Naive thymus-derived CD4-positive, alpha-beta T cell (primary cell): ENCODE measurements at regions of chr2 and their contacts with region 1.

Region 1: GRCh38 chr2:174688079-174688478 is 76.2 kb downstream of the CHRNA1 start:
- DNase-seq: peak in 6 of 9 donors; percentile 36 to 63 (median 45)
- ATAC-seq: peak; percentile 73
- H3K4me3 ChIP-seq: no peak overlapping the region
- H3K4me3 Mint-ChIP-seq: peak overlapping the region in 1 of 10 donors; percentile 40
- H3K27ac ChIP-seq: no peak overlapping the region
- H3K27ac Mint-ChIP-seq: peak overlapping the region in 7 of 9 donors; percentile 14 to 82 (median 21)
- H3K4me1 ChIP-seq: peaks cover 0 to 6% of the 10 kb centered on the region in 2 donors
- H3K4me1 Mint-ChIP-seq: peaks cover 19 to 45% (median 30%) of the 10 kb centered on the region in 7 donors
- H3K27me3 ChIP-seq: no peaks in the 10 kb centered on the region
- H3K27me3 Mint-ChIP-seq: peaks cover 0 to 6% (median 0%) of the 10 kb centered on the region in 5 donors

Region 2: GRCh38 chr2:174615871-174616436 is 72.1 kb before region 1 on chr2:
- CTCF ChIA-PET with region 1: interaction called, 223 read pairs
- POLR2A ChIA-PET with region 1: interaction called, 3 read pairs
- intact Hi-C with region 1: no loop called
- DNase-seq: peak in 2 of 9 donors; percentile 34 to 40
- ATAC-seq: peak; percentile 76
- H3K4me3 ChIP-seq: no peak overlapping the region
- H3K4me3 Mint-ChIP-seq: peak overlapping the region in 9 of 10 donors; percentile 29 to 76 (median 48)
- H3K27ac ChIP-seq: peak overlapping the region; percentile 46
- H3K27ac Mint-ChIP-seq: peak overlapping the region; percentile 9 to 92 (median 83)
- H3K4me1 ChIP-seq: peaks cover 50 to 57% of the 10 kb centered on the region in 2 donors
- H3K4me1 Mint-ChIP-seq: peaks cover 60 to 100% (median 94%) of the 10 kb centered on the region in 7 donors
- H3K27me3 ChIP-seq: no peaks in the 10 kb centered on the region
- H3K27me3 Mint-ChIP-seq: no peaks in the 10 kb centered on the region